ENCODE measurements at regions of chr3 and their contacts with region 1.

Region 1: GRCh38 chr3:143016321-143016972 is 15.1 kb downstream of the U2SURP start:
- DNase-seq: peak in 3 of 14 experiments; percentile 31 to 47 (median 33)
- ATAC-seq: peak; percentile 11
- H3K4me3 ChIP-seq: no peak overlapping the region
- H3K4me3 Mint-ChIP-seq: no peak overlapping the region
- H3K27ac ChIP-seq: no peak overlapping the region
- H3K27ac Mint-ChIP-seq: no peak overlapping the region
- H3K4me1 ChIP-seq: no peaks in the 10 kb centered on the region
- H3K4me1 Mint-ChIP-seq: peaks cover 20% of the 10 kb centered on the region
- H3K27me3 ChIP-seq: no peaks in the 10 kb centered on the region
- H3K27me3 Mint-ChIP-seq: no peaks in the 10 kb centered on the region
- CTCF ChIP-seq: peak; percentile 63

Region 2: GRCh38 chr3:143040261-143040879 is 23.9 kb after region 1 on chr3:
- CTCF ChIA-PET with region 1: no interaction called
- POLR2A ChIA-PET with region 1: no interaction called
- intact Hi-C with region 1: loop called in 1 of 2 experiments (anchors 2 kb)
- DNase-seq: peak in 2 of 14 experiments; percentile 11
- ATAC-seq: no peak
- H3K4me3 ChIP-seq: no peak overlapping the region
- H3K4me3 Mint-ChIP-seq: no peak overlapping the region
- H3K27ac ChIP-seq: no peak overlapping the region
- H3K27ac Mint-ChIP-seq: no peak overlapping the region
- H3K4me1 ChIP-seq: no peaks in the 10 kb centered on the region
- H3K4me1 Mint-ChIP-seq: peaks cover 21% of the 10 kb centered on the region
- H3K27me3 ChIP-seq: no peaks in the 10 kb centered on the region
- H3K27me3 Mint-ChIP-seq: no peaks in the 10 kb centered on the region
- CTCF ChIP-seq: no peak